Activated CD8-positive, alpha-beta memory T cell treated with anti-CD3 and anti-CD28 coated beads, Interleukin-2, amount 10 ng/mL, durations not matched to agents 7 days and 5 days (primary cell): ENCODE measurements at regions of chr11 and their contacts with region 1.

Region 1: GRCh38 chr11:62860835-62861563 is 19.7 kb upstream of the SLC3A2 start:
- DNase-seq: peak; percentile 51
- ATAC-seq: peak; percentile 41
- H3K4me3 Mint-ChIP-seq: no peak overlapping the region
- H3K27ac Mint-ChIP-seq: peak overlapping the region; percentile 83
- H3K4me1 Mint-ChIP-seq: peaks cover 59% of the 10 kb centered on the region
- H3K27me3 Mint-ChIP-seq: peaks cover under 1% of the 10 kb centered on the region

Region 2: GRCh38 chr11:62612366-62613290 is 248.4 kb before region 1 on chr11 and contains the starts of genes EML3 and ROM1:
- CTCF ChIA-PET with region 1: no interaction called
- DNase-seq: peak; percentile 95
- ATAC-seq: peak; percentile 83
- H3K4me3 Mint-ChIP-seq: peak within 1 kb of the TSS; percentile 100
- H3K27ac Mint-ChIP-seq: peak within 1 kb of the TSS; percentile 99
- H3K4me1 Mint-ChIP-seq: peaks cover 48% of the 10 kb centered on the region
- H3K27me3 Mint-ChIP-seq: no peaks in the 10 kb centered on the region
- total RNA-seq, gene EML3: 132 to 133 TPM
- total RNA-seq, gene ROM1: 1.1 to 1.5 TPM

Region 3: DNA sequence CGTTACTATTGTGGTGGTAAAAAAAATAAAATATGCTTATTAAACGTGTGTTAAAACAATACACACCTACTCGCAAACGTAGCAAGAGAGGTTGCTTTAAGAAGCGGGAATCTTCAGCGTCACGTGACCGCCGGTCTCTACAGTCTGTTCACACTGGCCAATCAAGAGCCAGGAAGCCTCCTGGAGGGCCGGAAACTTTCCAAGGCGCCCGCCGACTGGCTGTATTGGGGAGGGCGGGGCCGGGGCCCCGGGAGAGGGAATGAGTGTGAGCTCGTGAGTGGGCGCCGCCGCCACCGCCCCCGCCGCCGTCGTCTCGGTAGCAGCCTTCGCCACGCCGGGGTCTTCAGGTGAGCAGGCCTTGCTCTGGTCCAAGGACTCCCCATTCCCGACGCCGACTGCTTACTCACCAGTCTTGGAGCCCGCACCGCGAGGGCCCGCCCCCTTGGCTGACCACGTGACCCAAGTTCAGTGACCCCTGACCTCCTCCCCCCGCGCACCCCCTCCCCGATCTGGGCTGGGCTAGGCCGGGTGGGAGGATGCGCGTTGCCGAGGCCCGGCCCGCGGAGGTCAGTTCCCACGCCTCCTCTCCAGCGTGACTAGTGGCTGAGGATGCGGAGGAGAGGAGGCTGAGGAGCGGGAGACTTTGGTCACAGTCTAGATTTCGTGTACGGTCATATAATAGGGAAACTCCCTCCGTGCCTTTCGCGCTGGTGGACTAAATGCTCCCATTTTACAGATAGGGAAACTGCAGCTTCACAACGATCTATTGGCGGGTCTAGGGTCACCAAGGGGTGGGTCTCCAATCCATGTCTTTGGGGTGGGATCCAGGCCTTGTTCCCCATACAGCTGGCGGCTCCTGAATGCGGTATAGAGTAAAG is 89.6 kb before region 1 on chr11 and contains the start of gene TAF6L:
- CTCF ChIA-PET with region 1: interaction called, 10 read pairs
- DNase-seq: peak; percentile 97
- ATAC-seq: peak; percentile 89
- H3K4me3 Mint-ChIP-seq: peak within 1 kb of the TSS; percentile 88
- H3K27ac Mint-ChIP-seq: peak within 1 kb of the TSS; percentile 95
- H3K4me1 Mint-ChIP-seq: peaks cover 32% of the 10 kb centered on the region
- H3K27me3 Mint-ChIP-seq: no peaks in the 10 kb centered on the region
- total RNA-seq, gene TAF6L: 23.5 to 25.0 TPM

Region 4: GRCh38 chr11:62875698-62876478 is 14.9 kb after region 1 on chr11:
- CTCF ChIA-PET with region 1: interaction called, 28 read pairs
- DNase-seq: no peak
- ATAC-seq: no peak
- H3K4me3 Mint-ChIP-seq: no peak overlapping the region
- H3K27ac Mint-ChIP-seq: no peak overlapping the region
- H3K4me1 Mint-ChIP-seq: peaks cover 11% of the 10 kb centered on the region
- H3K27me3 Mint-ChIP-seq: no peaks in the 10 kb centered on the region

Region 5: DNA sequence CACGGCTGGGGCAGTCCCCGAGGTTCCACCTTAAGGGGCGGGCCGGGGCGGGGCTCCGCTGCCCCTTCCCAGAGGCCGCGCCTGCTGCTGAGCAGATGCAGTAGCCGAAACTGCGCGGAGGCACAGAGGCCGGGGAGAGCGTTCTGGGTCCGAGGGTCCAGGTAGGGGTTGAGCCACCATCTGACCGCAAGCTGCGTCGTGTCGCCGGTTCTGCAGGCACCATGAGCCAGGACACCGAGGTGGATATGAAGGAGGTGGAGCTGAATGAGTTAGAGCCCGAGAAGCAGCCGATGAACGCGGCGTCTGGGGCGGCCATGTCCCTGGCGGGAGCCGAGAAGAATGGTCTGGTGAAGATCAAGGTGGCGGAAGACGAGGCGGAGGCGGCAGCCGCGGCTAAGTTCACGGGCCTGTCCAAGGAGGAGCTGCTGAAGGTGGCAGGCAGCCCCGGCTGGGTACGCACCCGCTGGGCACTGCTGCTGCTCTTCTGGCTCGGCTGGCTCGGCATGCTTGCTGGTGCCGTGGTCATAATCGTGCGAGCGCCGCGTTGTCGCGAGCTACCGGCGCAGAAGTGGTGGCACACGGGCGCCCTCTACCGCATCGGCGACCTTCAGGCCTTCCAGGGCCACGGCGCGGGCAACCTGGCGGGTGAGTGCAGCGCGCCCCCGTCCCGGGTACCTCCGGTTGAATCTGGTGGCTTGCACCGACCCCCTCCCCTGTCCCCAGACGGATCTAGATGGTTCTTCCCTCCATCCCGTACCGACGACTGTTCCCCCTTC is 20.0 kb after region 1 on chr11 and contains the start of gene SLC3A2:
- CTCF ChIA-PET with region 1: interaction called, 28 read pairs
- DNase-seq: peak; percentile 94
- ATAC-seq: peak; percentile 85
- H3K4me3 Mint-ChIP-seq: peak within 1 kb of the TSS; percentile 96
- H3K27ac Mint-ChIP-seq: peak within 1 kb of the TSS; percentile 100
- H3K4me1 Mint-ChIP-seq: peaks cover 45% of the 10 kb centered on the region
- H3K27me3 Mint-ChIP-seq: no peaks in the 10 kb centered on the region
- total RNA-seq, gene SLC3A2: 213 to 259 TPM

Region 6: DNA sequence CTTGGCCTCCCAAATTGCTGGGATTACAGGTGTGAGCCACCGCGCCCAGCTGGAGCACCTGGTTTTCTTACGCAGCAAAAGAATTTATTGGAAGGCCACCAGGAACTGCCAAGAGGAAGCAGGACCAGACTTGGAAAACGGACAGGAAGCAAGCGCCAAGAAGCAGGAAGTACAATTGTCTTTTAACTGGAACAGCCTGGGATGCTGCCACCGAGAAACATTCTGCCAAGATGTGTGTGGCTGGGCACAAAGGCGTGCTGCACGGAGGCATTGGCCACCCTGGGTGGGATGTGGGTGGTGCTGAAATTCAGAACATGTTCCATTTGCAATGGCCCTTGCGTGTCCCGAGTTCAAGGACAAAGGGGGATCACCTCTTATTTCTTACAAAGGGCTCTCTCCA is 35.0 kb after region 1 on chr11:
- CTCF ChIA-PET with region 1: no interaction called
- DNase-seq: no peak
- ATAC-seq: no peak
- H3K4me3 Mint-ChIP-seq: no peak overlapping the region
- H3K27ac Mint-ChIP-seq: no peak overlapping the region
- H3K4me1 Mint-ChIP-seq: peaks cover 4% of the 10 kb centered on the region
- H3K27me3 Mint-ChIP-seq: peaks cover 24% of the 10 kb centered on the region